Posterior vena cava (tissue), 2 donors: ENCODE measurements at regions of chr11 and their contacts with region 1.

Region 1: GRCh38 chr11:19306179-19306944 is 65.6 kb upstream of the E2F8 start:
- DNase-seq: no peak

Region 2: GRCh38 chr11:20353829-20354434 is 1047.6 kb after region 1 on chr11:
- intact Hi-C with region 1: loop called in 1 of 2 experiments (anchors 5 kb)
- DNase-seq: no peak